Lower leg skin (tissue), 4 donors: ENCODE measurements at regions of chr7 and their contacts with region 1.

Region 1: DNA sequence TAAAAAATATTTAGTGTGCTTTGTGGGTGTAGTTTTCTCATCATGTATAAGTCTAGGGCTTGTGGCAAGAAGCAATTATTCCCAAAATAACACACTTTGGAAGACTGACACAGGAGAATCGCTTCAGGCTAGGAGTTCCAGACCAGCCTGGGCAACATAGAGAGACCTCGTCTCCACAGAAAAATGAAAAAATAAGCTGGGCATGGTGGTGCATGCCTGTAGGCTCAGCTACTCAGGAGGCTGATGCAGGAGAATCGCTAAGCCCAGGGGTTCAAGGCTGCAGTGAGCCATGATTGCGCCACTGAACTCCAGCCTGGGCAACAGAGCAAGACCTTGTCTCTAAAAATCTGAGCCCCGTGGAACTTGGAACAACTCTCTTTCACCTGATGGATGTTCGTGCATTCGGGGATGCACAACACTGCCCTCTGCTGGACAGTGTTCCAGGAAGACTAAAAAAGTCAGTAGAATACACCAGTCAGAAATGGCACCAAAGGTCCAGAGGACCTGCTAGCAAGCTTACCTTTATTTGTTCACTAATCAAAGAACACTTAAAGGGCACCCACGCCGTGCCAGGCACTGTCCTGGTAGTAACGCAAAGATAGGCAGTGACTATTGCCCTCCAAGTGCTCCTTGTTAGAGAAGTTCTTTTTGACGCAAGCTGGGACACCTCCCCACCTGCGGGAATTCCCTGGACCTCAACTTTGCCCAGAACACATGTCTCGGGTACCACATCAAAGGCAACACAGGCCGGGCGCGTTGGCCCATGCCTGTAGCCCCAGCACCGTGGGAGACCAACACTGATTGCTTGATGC is 81.9 kb upstream of the CALN1 start:
- DNase-seq: peak; percentile 31 to 83
- H3K4me3 ChIP-seq: no peak overlapping the region
- CTCF ChIP-seq: no peak
- POLR2A ChIP-seq: no peak

Region 2: GRCh38 chr7:71303566-71303965 is 1190.5 kb before region 1 on chr7:
- intact Hi-C with region 1: no loop called
- DNase-seq: no peak
- H3K4me3 ChIP-seq: no peak overlapping the region
- CTCF ChIP-seq: no peak
- POLR2A ChIP-seq: no peak

Region 3: GRCh38 chr7:71752171-71752935 is 741.7 kb before region 1 on chr7:
- intact Hi-C with region 1: loop called (anchors 5 kb)
- DNase-seq: peak in 1 of 2 donors; percentile 85
- H3K4me3 ChIP-seq: no peak overlapping the region
- CTCF ChIP-seq: no peak
- POLR2A ChIP-seq: no peak